ENCODE measurements at regions of chr22 and their contacts with region 1.

Region 1: DNA sequence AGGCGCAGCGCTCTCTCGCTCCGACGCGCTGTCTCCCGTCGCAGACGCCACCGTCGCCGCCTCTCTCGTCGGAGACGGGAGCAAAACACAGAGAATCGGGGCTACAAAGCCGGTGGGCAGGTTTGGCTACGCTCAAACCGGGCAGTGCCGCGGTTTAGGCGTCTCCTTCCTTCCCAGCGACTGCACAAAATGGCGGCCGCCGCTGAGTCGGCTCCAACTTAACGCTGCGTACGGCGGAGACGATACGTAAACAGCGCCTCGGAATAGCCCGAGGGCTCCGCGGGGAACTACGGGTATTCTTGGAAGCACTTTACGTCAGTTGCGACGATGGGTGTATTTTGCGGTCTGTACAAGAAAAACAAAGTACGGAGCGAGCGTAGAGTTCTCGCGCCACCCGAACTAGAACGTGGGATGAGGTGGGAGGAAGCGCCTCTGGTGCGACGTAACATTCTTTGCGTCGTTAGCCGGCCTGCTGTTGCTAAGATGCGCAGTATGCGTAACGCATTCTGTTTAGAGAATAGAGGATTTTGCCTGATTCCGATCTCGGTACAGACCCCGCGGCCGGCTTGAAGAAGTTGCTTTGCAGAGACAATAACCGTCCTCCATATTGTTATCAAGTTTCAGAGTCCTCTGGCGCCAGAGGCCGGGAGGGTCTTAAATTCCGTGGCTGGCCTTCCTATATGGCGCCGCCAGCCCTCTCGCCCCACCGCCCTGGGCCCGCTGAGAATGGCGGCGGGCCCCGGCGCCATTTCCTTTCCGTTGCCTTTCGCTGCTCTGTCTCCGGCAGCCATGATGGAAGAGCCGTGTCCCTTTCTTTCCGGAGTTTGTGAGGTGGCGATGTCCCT is at the start of gene DDX17:
- DNase-seq: peak; percentile 90 to 99 (median 92)

Region 2: GRCh38 chr22:38656256-38657044 is 150.1 kb after region 1 on chr22 and contains the starts of genes CBY1 and FAM227A:
- intact Hi-C with region 1: loop called (anchors 5 kb)
- DNase-seq: peak; percentile 80 to 98 (median 90)

Region 3: GRCh38 chr22:38705235-38706100 is 199.1 kb after region 1 on chr22 and contains the start of gene GTPBP1:
- intact Hi-C with region 1: loop called (anchors 10 kb)
- DNase-seq: peak; percentile 96 to 100 (median 98)

Region 4: GRCh38 chr22:38820020-38820419 is 313.7 kb after region 1 on chr22:
- intact Hi-C with region 1: no loop called
- DNase-seq: peak in 1 of 10 donors; percentile 40